ENCODE measurements at regions of chr2 and their contacts with region 1.

Region 1: GRCh38 chr2:64767670-64768468 is 114.2 kb upstream of the SERTAD2 start:
- DNase-seq: peak; percentile 88
- ATAC-seq: peak; percentile 79
- H3K4me3 ChIP-seq: peak overlapping the region; percentile 60 to 99 (median 87)
- H3K4me3 Mint-ChIP-seq: peak overlapping the region; percentile 94
- H3K27ac ChIP-seq: peak overlapping the region; percentile 82 to 95
- H3K27ac Mint-ChIP-seq: peak overlapping the region; percentile 97
- H3K4me1 ChIP-seq: peaks cover 13% of the 10 kb centered on the region in 2 donors
- H3K4me1 Mint-ChIP-seq: peaks cover 24% of the 10 kb centered on the region
- H3K27me3 ChIP-seq: no peaks in the 10 kb centered on the region
- H3K27me3 Mint-ChIP-seq: no peaks in the 10 kb centered on the region
- CTCF ChIP-seq: no peak

Region 2: DNA sequence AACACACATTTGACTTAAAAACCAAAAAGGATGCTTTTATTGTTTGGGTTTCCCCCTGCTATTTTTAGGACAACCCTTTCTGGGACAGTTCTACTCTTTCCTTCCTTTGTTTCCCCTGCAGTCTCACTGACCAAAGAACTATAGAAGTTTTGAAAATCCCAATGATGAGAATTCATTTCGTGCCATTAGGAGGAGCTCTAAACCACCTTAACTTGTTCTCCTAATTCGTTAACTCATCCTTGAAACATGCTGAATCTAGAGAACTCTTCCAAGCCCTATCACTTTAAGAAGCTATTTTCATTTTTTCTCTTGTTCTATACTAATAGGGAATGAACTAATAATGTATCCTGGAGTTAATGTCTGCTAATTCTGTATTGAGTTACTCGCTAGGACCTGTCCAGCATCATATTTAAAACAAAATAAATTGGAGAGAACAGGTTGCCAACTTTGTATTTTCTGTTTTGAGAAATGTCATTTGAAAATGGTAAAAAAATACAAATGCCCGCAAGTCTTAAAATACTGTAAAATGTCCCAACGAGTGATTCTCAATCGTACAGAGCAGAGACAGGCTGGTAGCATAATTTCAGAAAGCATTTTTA is 180.9 kb before region 1 on chr2:
- CTCF ChIA-PET with region 1: interaction called, 3 read pairs
- POLR2A ChIA-PET with region 1: no interaction called
- intact Hi-C with region 1: loop called (anchors 2 kb)
- DNase-seq: peak; percentile 72
- ATAC-seq: peak; percentile 58
- H3K4me3 ChIP-seq: no peak overlapping the region
- H3K4me3 Mint-ChIP-seq: no peak overlapping the region
- H3K27ac ChIP-seq: no peak overlapping the region
- H3K27ac Mint-ChIP-seq: peak overlapping the region; percentile 32
- H3K4me1 ChIP-seq: peaks cover 0 to 4% of the 10 kb centered on the region in 2 donors
- H3K4me1 Mint-ChIP-seq: peaks cover 14% of the 10 kb centered on the region
- H3K27me3 ChIP-seq: no peaks in the 10 kb centered on the region
- H3K27me3 Mint-ChIP-seq: no peaks in the 10 kb centered on the region
- CTCF ChIP-seq: peak; percentile 88

Region 3: GRCh38 chr2:64730551-64731262 is 37.2 kb before region 1 on chr2:
- CTCF ChIA-PET with region 1: interaction called, 5 read pairs
- POLR2A ChIA-PET with region 1: interaction called, 7 read pairs
- intact Hi-C with region 1: loop called (anchors 1 kb)
- DNase-seq: peak; percentile 70
- ATAC-seq: peak; percentile 47
- H3K4me3 ChIP-seq: peak overlapping the region; percentile 43 to 81 (median 61)
- H3K4me3 Mint-ChIP-seq: peak overlapping the region; percentile 87
- H3K27ac ChIP-seq: peak overlapping the region; percentile 84
- H3K27ac Mint-ChIP-seq: peak overlapping the region; percentile 97
- H3K4me1 ChIP-seq: peaks cover 50% of the 10 kb centered on the region in 2 donors
- H3K4me1 Mint-ChIP-seq: peaks cover 57% of the 10 kb centered on the region
- H3K27me3 ChIP-seq: no peaks in the 10 kb centered on the region
- H3K27me3 Mint-ChIP-seq: no peaks in the 10 kb centered on the region
- CTCF ChIP-seq: no peak

Region 4: DNA sequence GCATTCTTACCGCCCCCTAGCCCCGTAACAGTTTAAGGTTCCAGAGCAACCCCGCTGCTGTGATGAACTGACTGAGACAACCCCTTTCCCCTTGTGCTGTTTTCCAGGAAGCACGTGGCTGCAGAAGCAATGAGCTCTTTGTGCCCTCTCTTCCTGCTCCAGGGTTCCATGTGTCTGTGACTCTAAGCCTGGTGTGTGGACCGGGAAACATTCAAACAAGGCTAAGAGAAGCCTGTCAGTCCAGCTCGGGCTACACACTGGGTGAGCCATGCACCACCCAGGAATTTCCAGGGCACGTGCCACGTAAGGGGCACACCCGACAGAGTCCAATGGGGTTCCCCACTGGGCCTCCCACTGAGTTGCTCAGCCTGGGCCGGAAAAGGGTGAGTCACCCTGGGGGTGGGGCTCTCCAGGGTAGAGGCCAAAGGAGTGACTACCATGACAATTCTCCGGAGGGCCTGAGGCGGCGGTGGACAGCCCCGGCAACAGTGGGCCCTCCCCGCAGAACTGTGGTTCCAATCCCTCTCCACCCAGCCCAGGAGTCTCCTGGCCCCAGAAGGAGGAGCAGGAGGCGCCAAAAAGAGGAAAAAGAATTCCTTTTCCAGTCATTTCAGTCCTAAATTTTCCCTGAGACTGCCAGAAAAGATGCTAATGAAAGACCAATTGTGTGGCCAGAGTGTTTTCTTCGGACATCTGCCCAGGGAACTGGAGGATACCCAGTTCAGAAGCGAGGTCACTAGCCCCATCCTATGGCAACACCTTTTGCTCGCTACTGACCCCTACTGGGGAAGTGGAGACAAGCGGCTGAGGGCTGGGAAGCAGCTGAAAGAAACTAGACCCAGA is 63.5 kb after region 1 on chr2:
- CTCF ChIA-PET with region 1: interaction called, 3 read pairs
- POLR2A ChIA-PET with region 1: no interaction called
- intact Hi-C with region 1: loop called (anchors 1 kb)
- DNase-seq: peak; percentile 82
- ATAC-seq: peak; percentile 91
- H3K4me3 ChIP-seq: peak overlapping the region in 3 of 5 experiments; percentile 11 to 38 (median 16)
- H3K4me3 Mint-ChIP-seq: peak overlapping the region; percentile 63
- H3K27ac ChIP-seq: no peak overlapping the region
- H3K27ac Mint-ChIP-seq: peak overlapping the region; percentile 77
- H3K4me1 ChIP-seq: peaks cover 8 to 12% of the 10 kb centered on the region in 2 donors
- H3K4me1 Mint-ChIP-seq: peaks cover 13% of the 10 kb centered on the region
- H3K27me3 ChIP-seq: no peaks in the 10 kb centered on the region
- H3K27me3 Mint-ChIP-seq: no peaks in the 10 kb centered on the region
- CTCF ChIP-seq: peak; percentile 96

Region 5: DNA sequence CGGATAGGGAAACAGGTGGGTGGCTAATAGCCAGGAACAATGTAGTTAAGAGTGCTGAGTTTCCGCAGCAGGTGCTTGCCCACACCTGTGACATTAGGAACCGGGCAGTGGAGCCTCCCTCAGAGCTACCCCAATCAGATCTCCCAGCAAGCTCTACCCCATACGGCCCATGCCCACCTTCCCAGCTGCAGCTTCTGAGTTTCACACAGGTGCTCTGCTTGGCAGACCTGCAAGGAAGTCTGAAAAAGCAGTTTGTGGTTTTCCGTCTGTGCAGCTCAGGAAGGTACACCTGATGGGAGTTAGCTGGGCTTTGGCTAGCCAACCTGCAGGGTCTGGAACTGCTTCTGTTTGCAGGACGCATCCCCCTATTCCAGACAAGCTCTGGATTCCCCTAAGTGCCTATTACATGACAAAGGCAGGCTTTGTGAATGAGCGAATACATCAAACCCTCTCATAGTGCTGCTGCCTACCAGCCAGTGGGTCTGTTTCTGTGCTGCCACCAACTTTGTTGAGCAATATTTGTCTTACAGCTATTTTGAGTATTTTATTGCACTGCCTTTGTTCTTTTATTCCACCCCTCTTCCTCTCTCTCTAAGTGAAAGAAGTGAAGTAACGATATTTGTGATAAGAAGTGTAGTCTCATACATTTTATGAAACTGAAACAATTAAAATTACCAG is 263.6 kb after region 1 on chr2:
- CTCF ChIA-PET with region 1: no interaction called
- POLR2A ChIA-PET with region 1: no interaction called
- intact Hi-C with region 1: loop called (anchors 5 kb)
- DNase-seq: peak; percentile 68
- ATAC-seq: peak; percentile 12
- H3K4me3 ChIP-seq: peak overlapping the region; percentile 9 to 63 (median 44)
- H3K4me3 Mint-ChIP-seq: peak overlapping the region; percentile 89
- H3K27ac ChIP-seq: peak overlapping the region; percentile 67 to 87
- H3K27ac Mint-ChIP-seq: peak overlapping the region; percentile 87
- H3K4me1 ChIP-seq: peaks cover 60 to 71% of the 10 kb centered on the region in 2 donors
- H3K4me1 Mint-ChIP-seq: peaks cover 65% of the 10 kb centered on the region
- H3K27me3 ChIP-seq: no peaks in the 10 kb centered on the region
- H3K27me3 Mint-ChIP-seq: no peaks in the 10 kb centered on the region
- CTCF ChIP-seq: no peak